Sciatic nerve (tissue), 2 donors: ENCODE measurements at regions of chr3 and their contacts with region 1.

Region 1: DNA sequence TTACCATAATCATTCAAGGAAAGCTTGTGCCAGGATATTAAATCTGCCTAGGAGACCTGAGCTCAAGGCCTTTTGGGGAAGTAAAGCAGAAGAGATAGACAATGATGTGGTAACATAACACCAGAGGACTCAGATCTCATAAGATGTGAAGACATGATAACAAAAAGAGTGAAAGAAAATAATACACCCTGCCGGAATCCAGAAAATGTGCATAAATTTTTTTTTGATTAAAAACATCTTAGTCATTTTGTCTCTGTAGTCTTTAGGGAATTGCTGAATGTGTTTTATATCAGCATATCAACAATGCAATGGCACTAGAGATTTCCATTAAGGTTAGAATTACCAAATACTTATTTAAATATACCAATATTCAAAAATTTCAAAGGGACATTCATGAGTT is 326.8 kb upstream of the ROBO1 start:
- DNase-seq: no peak
- ATAC-seq: no peak

Region 2: DNA sequence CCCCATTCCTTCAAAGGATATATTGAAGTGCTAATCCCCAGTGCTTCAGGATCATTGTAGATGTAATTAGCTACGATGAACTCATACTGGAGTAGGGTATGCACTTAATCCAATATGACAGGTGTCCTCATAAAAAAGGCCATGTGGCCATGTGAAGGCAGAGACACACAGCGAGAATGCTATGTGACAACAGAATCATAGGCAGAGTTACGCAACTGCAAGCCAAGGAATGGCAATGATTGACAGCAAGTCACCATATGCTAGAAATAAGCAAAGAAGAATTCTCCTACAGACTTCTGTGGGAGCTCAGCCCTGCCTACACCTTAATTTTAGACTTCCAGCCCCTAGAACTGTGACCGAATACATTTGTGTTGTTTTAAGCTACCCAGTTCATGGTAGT is 548.8 kb after region 1 on chr3:
- intact Hi-C with region 1: loop called (anchors 5 kb)
- DNase-seq: no peak
- ATAC-seq: no peak